ENCODE measurements at regions of chr10 and their contacts with region 1.

Region 1: GRCh38 chr10:127853868-127854768 is 38.6 kb downstream of the CLRN3 start:
- DNase-seq: peak; percentile 42 to 71
- ATAC-seq: peak; percentile 78 to 92 (median 79)
- H3K4me3 ChIP-seq: no peak overlapping the region
- H3K4me3 Mint-ChIP-seq: no peak overlapping the region
- H3K27ac ChIP-seq: no peak overlapping the region
- H3K27ac Mint-ChIP-seq: no peak overlapping the region
- H3K4me1 ChIP-seq: peaks cover 22% of the 10 kb centered on the region
- H3K4me1 Mint-ChIP-seq: peaks cover 8% of the 10 kb centered on the region in 2 donors
- H3K27me3 ChIP-seq: peaks cover 3% of the 10 kb centered on the region
- H3K27me3 Mint-ChIP-seq: peaks cover 16% of the 10 kb centered on the region in 2 donors
- CTCF ChIP-seq: peak; percentile 78

Region 2: GRCh38 chr10:127563718-127564553 is 290.2 kb before region 1 on chr10:
- intact Hi-C with region 1: loop called (anchors 10 kb)
- DNase-seq: peak in 1 of 2 donors; percentile 20
- ATAC-seq: peak in 2 of 3 donors; percentile 46 to 67
- H3K4me3 ChIP-seq: no peak overlapping the region
- H3K4me3 Mint-ChIP-seq: no peak overlapping the region
- H3K27ac ChIP-seq: no peak overlapping the region
- H3K27ac Mint-ChIP-seq: no peak overlapping the region
- H3K4me1 ChIP-seq: no peaks in the 10 kb centered on the region
- H3K4me1 Mint-ChIP-seq: no peaks in the 10 kb centered on the region
- H3K27me3 ChIP-seq: no peaks in the 10 kb centered on the region
- H3K27me3 Mint-ChIP-seq: peaks cover 15 to 25% of the 10 kb centered on the region in 2 donors
- CTCF ChIP-seq: peak; percentile 52

Region 3: DNA sequence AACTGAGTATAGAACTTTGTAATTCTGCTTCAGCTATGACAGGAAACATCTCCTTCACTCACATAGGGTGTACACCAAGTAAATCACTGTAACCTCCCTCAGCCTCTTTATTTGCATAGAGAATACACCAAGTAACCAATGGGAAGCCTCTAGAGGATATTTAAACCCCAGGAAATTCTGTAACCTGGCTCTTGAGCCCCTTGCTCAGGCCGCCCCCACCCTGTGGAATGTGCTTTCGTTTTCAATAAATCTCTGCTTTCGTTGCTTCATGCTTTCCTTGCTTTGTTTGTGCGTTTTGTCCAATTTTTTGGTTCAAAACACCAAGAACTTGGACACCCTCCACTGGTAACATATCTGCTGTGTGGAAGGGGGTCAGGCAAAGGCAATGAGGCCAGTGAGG is 21.6 kb before region 1 on chr10:
- intact Hi-C with region 1: no loop called
- DNase-seq: no peak
- ATAC-seq: no peak
- H3K4me3 ChIP-seq: no peak overlapping the region
- H3K4me3 Mint-ChIP-seq: no peak overlapping the region
- H3K27ac ChIP-seq: no peak overlapping the region
- H3K27ac Mint-ChIP-seq: no peak overlapping the region
- H3K4me1 ChIP-seq: no peaks in the 10 kb centered on the region
- H3K4me1 Mint-ChIP-seq: no peaks in the 10 kb centered on the region
- H3K27me3 ChIP-seq: no peaks in the 10 kb centered on the region
- H3K27me3 Mint-ChIP-seq: peaks cover 8 to 47% of the 10 kb centered on the region in 2 donors
- CTCF ChIP-seq: no peak

Region 4: GRCh38 chr10:127880557-127880956 is 26.4 kb after region 1 on chr10:
- intact Hi-C with region 1: no loop called
- DNase-seq: peak in 1 of 2 donors; percentile 9
- ATAC-seq: peak in 2 of 3 donors; percentile 33 to 52
- H3K4me3 ChIP-seq: no peak overlapping the region
- H3K4me3 Mint-ChIP-seq: no peak overlapping the region
- H3K27ac ChIP-seq: no peak overlapping the region
- H3K27ac Mint-ChIP-seq: no peak overlapping the region
- H3K4me1 ChIP-seq: peaks cover 18% of the 10 kb centered on the region
- H3K4me1 Mint-ChIP-seq: peaks cover 0 to 5% of the 10 kb centered on the region in 2 donors
- H3K27me3 ChIP-seq: no peaks in the 10 kb centered on the region
- H3K27me3 Mint-ChIP-seq: peaks cover 0 to 10% of the 10 kb centered on the region in 2 donors
- CTCF ChIP-seq: no peak

Measured in natural killer cell (primary cell).